KBM-7 (cell line): ENCODE measurements at regions of chr15 and their contacts with region 1.

Region 1: GRCh38 chr15:82999905-83000671 is 11.4 kb downstream of the C15orf40 start:
- DNase-seq: peak; percentile 90

Region 2: GRCh38 chr15:82849556-82850512 is 150.3 kb before region 1 on chr15:
- in situ Hi-C with region 1: loop called (anchors 10 kb)
- DNase-seq: peak; percentile 99